Endothelial cell of umbilical vein (primary cell): ENCODE measurements at regions of chr2 and their contacts with region 1.

Region 1: GRCh38 chr2:239267288-239267951 is 133.4 kb downstream of the HDAC4 start:
- DNase-seq: peak; percentile 37
- H3K4me3 ChIP-seq: no peak overlapping the region
- H3K27ac ChIP-seq: no peak overlapping the region
- H3K4me1 ChIP-seq: peaks cover 14% of the 10 kb centered on the region
- H3K27me3 ChIP-seq: no peaks in the 10 kb centered on the region
- CTCF ChIP-seq: peak; percentile 6 to 29
- POLR2A ChIP-seq: no peak

Region 2: GRCh38 chr2:239349448-239350135 is 82.2 kb after region 1 on chr2:
- CTCF ChIA-PET with region 1: no interaction called
- POLR2A ChIA-PET with region 1: no interaction called
- dilution Hi-C with region 1: no loop called
- intact Hi-C with region 1: loop called (anchors 5 kb)
- DNase-seq: no peak
- H3K4me3 ChIP-seq: no peak overlapping the region
- H3K27ac ChIP-seq: no peak overlapping the region
- H3K4me1 ChIP-seq: no peaks in the 10 kb centered on the region
- H3K27me3 ChIP-seq: no peaks in the 10 kb centered on the region
- CTCF ChIP-seq: no peak
- POLR2A ChIP-seq: no peak

Region 3: DNA sequence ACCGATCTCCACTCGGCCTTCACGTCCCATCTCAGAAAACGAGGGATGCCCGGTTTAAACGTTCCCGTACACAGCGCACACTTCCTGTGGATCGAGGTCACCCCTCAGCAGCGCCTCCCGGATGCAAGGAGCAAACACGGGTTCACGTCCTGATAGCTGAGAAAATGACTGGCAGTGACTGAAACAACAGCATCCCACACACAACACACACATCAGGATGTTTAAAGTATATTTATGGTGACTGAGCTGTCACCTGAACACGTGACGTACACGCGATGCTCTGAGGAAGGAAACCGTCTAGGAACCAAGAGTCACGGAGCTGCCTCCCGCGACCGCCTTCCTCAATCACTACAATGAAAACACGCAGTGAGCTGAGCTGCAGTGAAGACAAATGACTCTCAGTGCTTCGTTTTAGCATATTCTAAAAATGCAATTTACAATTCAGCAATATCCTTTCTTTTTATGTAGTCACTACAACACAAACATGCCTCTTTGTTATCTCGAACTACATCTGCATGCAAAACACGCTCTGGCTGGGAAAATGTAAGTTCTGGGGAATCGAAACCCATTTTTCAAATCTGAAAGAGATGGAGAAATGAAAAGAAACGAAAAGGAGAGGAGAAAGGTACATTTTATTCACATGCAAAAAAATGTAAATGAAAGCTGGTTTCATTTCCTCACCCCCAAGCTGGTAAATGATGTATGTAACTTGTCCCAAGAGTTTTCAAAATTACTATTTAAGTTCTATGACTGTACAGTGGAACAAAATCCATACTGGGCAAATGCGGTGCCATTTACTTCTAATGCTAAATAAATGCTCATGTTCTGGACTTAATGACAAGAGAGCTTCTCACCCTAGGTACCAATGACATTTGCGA is 113.7 kb after region 1 on chr2:
- CTCF ChIA-PET with region 1: interaction called, 6 read pairs
- POLR2A ChIA-PET with region 1: no interaction called
- dilution Hi-C with region 1: no loop called
- intact Hi-C with region 1: loop called (anchors 5 kb)
- DNase-seq: peak; percentile 80
- H3K4me3 ChIP-seq: peak overlapping the region in 2 of 3 experiments; percentile 27 to 31
- H3K27ac ChIP-seq: peak overlapping the region; percentile 19
- H3K4me1 ChIP-seq: peaks cover 15% of the 10 kb centered on the region
- H3K27me3 ChIP-seq: no peaks in the 10 kb centered on the region
- CTCF ChIP-seq: no peak
- POLR2A ChIP-seq: no peak